K562 (cell line): ENCODE measurements at regions of chr6 and their contacts with region 1.

Region 1: GRCh38 chr6:147506704-147507114 is 1.8 kb upstream of the SAMD5 start:
- DNase-seq: peak; percentile 85 to 88 (median 87)
- ATAC-seq: peak; percentile 92
- H3K4me3 ChIP-seq: no peak overlapping the region
- H3K27ac ChIP-seq: no peak overlapping the region
- H3K4me1 ChIP-seq: peaks cover 18 to 29% of the 10 kb centered on the region in 2 experiments; a peak in 4 of 5 replicates
- H3K27me3 ChIP-seq: peaks cover 9 to 33% of the 10 kb centered on the region in 2 experiments
- CTCF ChIP-seq: peak; percentile 93 to 94 (median 94)
- EP300 ChIP-seq: no peak
- POLR2A ChIP-seq: no peak
- RAD21 ChIP-seq: peak; percentile 96 to 99

Region 2: GRCh38 chr6:146905181-146905704 is 601.5 kb before region 1 on chr6:
- CTCF ChIA-PET with region 1: no interaction called
- POLR2A ChIA-PET with region 1: no interaction called
- in situ Hi-C with region 1: no loop called
- intact Hi-C with region 1: loop called (anchors 1 kb)
- DNase-seq: no peak
- ATAC-seq: no peak
- H3K4me3 ChIP-seq: no peak overlapping the region
- H3K27ac ChIP-seq: no peak overlapping the region
- H3K4me1 ChIP-seq: peaks cover 0 to 37% of the 10 kb centered on the region in 2 experiments; a peak in 4 of 5 replicates
- H3K27me3 ChIP-seq: no peaks in the 10 kb centered on the region
- CTCF ChIP-seq: no peak
- EP300 ChIP-seq: no peak
- POLR2A ChIP-seq: no peak
- RAD21 ChIP-seq: no peak

Region 3: DNA sequence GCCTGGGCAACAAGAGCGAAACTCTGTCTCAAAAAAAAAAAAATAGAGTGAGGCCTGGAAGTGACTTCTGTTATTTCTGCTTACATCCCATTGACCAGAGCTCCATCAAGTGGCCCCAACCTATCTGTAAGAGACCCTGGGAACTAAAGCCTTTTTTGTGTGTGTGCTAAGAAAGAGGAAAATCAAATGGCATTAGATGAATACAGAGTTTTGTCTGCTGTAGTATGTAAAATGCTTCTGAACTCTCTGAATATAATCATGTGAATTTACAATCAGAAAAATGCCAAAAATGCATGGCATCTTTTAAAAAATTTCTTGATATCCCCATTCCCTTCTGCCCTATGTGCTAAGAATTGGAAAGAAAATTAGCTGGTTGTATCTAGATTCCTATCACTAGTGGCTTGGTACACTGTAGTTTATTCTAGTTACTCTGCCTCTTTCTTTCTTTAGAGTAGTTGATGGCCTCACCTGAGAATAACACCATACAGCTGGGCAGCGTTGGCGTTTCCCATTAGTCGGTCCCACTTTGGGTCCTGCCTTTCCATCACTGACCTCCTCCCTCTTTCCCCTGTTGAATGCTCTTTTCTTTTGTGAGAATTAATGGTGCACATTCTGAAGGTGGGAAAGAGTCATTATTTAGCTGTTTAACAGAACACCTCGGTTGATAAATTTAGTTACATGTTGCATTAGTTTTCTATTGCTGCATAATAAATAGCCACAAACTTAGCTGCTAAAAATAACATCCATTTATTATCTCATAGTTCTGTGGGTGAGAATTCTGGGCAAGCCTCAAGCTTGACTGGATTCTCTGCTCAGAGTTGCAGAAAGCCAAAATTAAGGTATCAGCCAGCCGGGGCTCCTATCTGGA is 40.0 kb after region 1 on chr6:
- CTCF ChIA-PET with region 1: no interaction called
- POLR2A ChIA-PET with region 1: no interaction called
- in situ Hi-C with region 1: no loop called
- intact Hi-C with region 1: loop called (anchors 2 kb)
- DNase-seq: no peak
- ATAC-seq: no peak
- H3K4me3 ChIP-seq: no peak overlapping the region
- H3K27ac ChIP-seq: no peak overlapping the region
- H3K4me1 ChIP-seq: peaks cover 3 to 12% of the 10 kb centered on the region in 2 experiments; a peak in 3 of 5 replicates
- H3K27me3 ChIP-seq: peaks cover 0 to 2% of the 10 kb centered on the region in 2 experiments; a peak in 1 of 5 replicates
- CTCF ChIP-seq: no peak
- EP300 ChIP-seq: no peak
- POLR2A ChIP-seq: no peak
- RAD21 ChIP-seq: peak in 1 of 2 experiments; percentile 4; a peak in 1 of 4 replicates

Region 4: DNA sequence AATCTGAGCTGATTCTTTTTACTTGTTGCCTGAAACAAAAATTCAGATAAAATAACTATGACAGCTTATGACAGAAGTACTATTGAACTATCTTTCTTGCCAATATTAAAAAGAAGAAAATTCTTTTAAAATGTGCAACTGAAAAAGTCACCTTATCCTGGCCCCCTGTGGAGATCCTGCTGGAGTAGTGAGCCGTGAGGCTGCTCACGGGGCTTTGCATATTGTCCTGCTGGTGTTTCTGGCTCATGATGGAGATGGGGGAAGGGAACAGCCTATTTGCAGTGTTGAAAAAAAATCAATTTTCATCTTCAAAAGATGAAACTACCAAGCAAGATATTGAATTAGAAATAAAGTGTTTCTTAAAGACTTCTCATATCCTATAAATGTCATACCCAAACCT is 217.7 kb after region 1 on chr6:
- CTCF ChIA-PET with region 1: no interaction called
- POLR2A ChIA-PET with region 1: no interaction called
- in situ Hi-C with region 1: no loop called
- intact Hi-C with region 1: loop called (anchors 10 kb)
- DNase-seq: no peak
- ATAC-seq: no peak
- H3K4me3 ChIP-seq: no peak overlapping the region
- H3K27ac ChIP-seq: no peak overlapping the region
- H3K4me1 ChIP-seq: peaks cover 0 to 3% of the 10 kb centered on the region in 2 experiments; a peak in 1 of 5 replicates
- H3K27me3 ChIP-seq: no peaks in the 10 kb centered on the region
- CTCF ChIP-seq: no peak
- EP300 ChIP-seq: no peak
- POLR2A ChIP-seq: no peak
- RAD21 ChIP-seq: no peak

Region 5: DNA sequence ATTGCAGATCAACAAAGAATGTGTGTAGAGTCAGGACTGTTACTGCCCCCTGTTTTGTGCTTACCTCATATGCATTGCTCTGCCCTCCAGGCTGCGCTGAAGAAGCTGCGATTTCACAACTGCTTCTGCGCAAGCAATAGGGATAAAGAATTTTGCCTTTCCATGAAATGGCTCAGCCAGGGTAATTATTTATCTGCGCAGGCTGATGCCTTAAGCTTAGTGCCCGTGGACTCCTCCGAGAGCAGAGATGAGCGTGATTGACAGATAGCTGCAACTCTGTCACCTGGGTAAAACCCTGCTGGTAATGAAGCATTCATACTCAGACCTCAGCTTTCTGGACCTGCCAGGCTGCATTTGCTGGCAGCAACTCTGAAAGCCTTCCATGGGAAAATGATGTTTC is 372.4 kb after region 1 on chr6:
- CTCF ChIA-PET with region 1: no interaction called
- POLR2A ChIA-PET with region 1: no interaction called
- in situ Hi-C with region 1: no loop called
- intact Hi-C with region 1: no loop called
- DNase-seq: no peak
- ATAC-seq: no peak
- H3K4me3 ChIP-seq: no peak overlapping the region
- H3K27ac ChIP-seq: no peak overlapping the region
- H3K4me1 ChIP-seq: no peaks in the 10 kb centered on the region
- H3K27me3 ChIP-seq: no peaks in the 10 kb centered on the region
- CTCF ChIP-seq: no peak
- EP300 ChIP-seq: no peak
- POLR2A ChIP-seq: no peak
- RAD21 ChIP-seq: no peak

Region 6: GRCh38 chr6:147970975-147971374 is 464.3 kb after region 1 on chr6:
- CTCF ChIA-PET with region 1: interaction called, 11 read pairs
- POLR2A ChIA-PET with region 1: no interaction called
- in situ Hi-C with region 1: no loop called
- intact Hi-C with region 1: loop called (anchors 2 kb)
- DNase-seq: peak in 1 of 4 experiments; percentile 26
- ATAC-seq: peak; percentile 77
- H3K4me3 ChIP-seq: no peak overlapping the region
- H3K27ac ChIP-seq: no peak overlapping the region
- H3K4me1 ChIP-seq: no peaks in the 10 kb centered on the region
- H3K27me3 ChIP-seq: no peaks in the 10 kb centered on the region
- CTCF ChIP-seq: peak; percentile 26 to 57 (median 29); a peak in 3 of 6 replicates
- EP300 ChIP-seq: no peak
- POLR2A ChIP-seq: no peak
- RAD21 ChIP-seq: peak; percentile 39 to 67

Region 7: DNA sequence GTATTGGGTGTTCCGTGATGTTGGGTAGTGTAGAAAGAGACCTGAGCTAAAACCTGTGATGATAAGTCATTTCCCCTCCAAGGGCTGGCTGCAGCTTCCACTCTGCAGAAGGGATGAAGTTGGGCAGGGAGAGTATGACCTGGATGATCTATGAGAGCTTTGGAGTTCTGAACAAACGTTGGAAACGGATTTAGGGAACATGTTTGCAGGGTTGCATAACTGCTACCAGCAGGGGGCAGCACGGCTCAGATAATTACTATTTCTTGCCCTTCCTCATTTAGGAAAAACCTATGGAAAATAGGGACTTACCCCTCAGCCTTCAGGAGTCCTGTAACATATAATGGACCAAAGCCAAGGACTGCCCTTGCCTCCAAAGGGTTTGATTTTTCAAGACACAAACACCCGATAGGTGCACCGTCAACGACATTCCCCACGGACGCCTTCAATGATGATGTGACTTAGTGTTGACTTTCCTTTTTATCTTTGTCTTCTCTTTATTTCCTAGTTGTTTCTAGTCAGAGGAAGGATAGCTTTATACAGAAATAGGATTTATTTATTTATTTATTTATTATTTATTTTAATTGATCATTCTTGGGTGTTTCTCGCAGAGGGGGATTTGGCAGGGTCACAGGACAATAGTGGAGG is 671.0 kb after region 1 on chr6:
- CTCF ChIA-PET with region 1: no interaction called
- POLR2A ChIA-PET with region 1: no interaction called
- in situ Hi-C with region 1: no loop called
- intact Hi-C with region 1: loop called (anchors 5 kb)
- DNase-seq: peak; percentile 34 to 62 (median 55)
- ATAC-seq: peak; percentile 71
- H3K4me3 ChIP-seq: no peak overlapping the region
- H3K27ac ChIP-seq: no peak overlapping the region
- H3K4me1 ChIP-seq: no peaks in the 10 kb centered on the region; a peak in 1 of 5 replicates
- H3K27me3 ChIP-seq: 0 out of 5 replicates have a peak, but pooled peaks cover 0 to 4% of the 10 kb centered on the region in 2 experiments
- CTCF ChIP-seq: peak; percentile 64 to 74 (median 73)
- EP300 ChIP-seq: no peak
- POLR2A ChIP-seq: no peak
- RAD21 ChIP-seq: peak in 1 of 2 experiments; percentile 59; a peak in 2 of 4 replicates

Region 8: GRCh38 chr6:148464319-148465010 is 957.8 kb after region 1 on chr6:
- CTCF ChIA-PET with region 1: interaction called, 5 read pairs
- POLR2A ChIA-PET with region 1: no interaction called
- in situ Hi-C with region 1: no loop called
- intact Hi-C with region 1: loop called (anchors 2 kb)
- DNase-seq: peak; percentile 71 to 77 (median 72)
- ATAC-seq: peak; percentile 97
- H3K4me3 ChIP-seq: no peak overlapping the region
- H3K27ac ChIP-seq: no peak overlapping the region
- H3K4me1 ChIP-seq: no peaks in the 10 kb centered on the region
- H3K27me3 ChIP-seq: peaks cover 8 to 13% of the 10 kb centered on the region in 2 experiments; a peak in 3 of 5 replicates
- CTCF ChIP-seq: peak; percentile 91 to 98 (median 94)
- EP300 ChIP-seq: no peak
- POLR2A ChIP-seq: no peak
- RAD21 ChIP-seq: peak; percentile 81 to 85